Upper lobe of right lung (tissue), 1 donor: ENCODE measurements at regions of chr5 and their contacts with region 1.

Region 1: GRCh38 chr5:141878711-141879425 is 658 bp upstream of the PCDH1 start:
- DNase-seq: peak; percentile 89
- ATAC-seq: peak; percentile 86
- H3K4me3 ChIP-seq: peak overlapping the region; percentile 66
- H3K27ac ChIP-seq: peak overlapping the region; percentile 76
- H3K4me1 ChIP-seq: peaks cover 27% of the 10 kb centered on the region
- H3K27me3 ChIP-seq: peaks cover 35% of the 10 kb centered on the region
- CTCF ChIP-seq: peak; percentile 99

Region 2: GRCh38 chr5:141691867-141692532 is 186.9 kb before region 1 on chr5:
- intact Hi-C with region 1: loop called (anchors 5 kb)
- DNase-seq: peak; percentile 92
- ATAC-seq: peak; percentile 97
- H3K4me3 ChIP-seq: peak overlapping the region; percentile 37
- H3K27ac ChIP-seq: no peak overlapping the region
- H3K4me1 ChIP-seq: peaks cover 9% of the 10 kb centered on the region
- H3K27me3 ChIP-seq: no peaks in the 10 kb centered on the region
- CTCF ChIP-seq: peak; percentile 99

Region 3: DNA sequence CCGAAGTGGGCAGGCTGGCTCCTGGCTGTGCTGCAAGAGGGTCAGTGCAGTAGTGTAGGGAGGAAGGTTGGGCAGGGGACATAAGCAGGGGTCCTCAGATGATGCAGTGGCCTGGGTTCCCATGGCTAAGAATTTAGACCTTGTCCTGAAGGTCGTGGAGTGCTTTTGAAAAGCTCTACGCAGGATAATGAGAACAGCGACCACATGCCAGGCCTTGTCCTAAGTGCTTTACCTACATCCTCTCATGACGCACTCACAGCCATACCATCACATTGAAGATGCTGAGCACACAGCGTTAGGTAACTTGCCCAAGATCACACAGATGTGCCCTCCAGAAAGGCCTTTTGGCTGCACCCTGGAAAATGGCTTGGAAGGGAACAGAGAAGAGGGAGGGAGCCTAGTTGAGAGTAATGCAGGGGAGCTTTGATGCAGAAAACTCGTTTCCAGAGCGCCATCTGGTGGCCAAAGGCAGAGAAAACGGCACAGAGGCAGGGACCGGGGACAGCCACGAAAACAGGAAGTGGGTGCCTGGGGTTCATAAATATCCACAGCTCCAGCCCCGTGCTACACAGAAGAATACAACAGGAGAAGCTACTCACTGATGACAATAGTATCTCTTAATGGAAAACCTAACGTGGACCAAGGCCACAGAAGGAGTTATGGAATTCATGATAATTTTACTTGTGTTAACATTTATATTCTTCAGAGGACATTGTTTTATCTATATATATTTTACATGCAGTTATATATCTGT is 81.8 kb after region 1 on chr5:
- intact Hi-C with region 1: loop called (anchors 5 kb)
- DNase-seq: peak; percentile 89
- ATAC-seq: peak; percentile 91
- H3K4me3 ChIP-seq: no peak overlapping the region
- H3K27ac ChIP-seq: peak overlapping the region; percentile 13
- H3K4me1 ChIP-seq: peaks cover 20% of the 10 kb centered on the region
- H3K27me3 ChIP-seq: no peaks in the 10 kb centered on the region
- CTCF ChIP-seq: peak; percentile 89